ENCODE measurements at regions of chr20 and their contacts with region 1.

Region 1: GRCh38 chr20:23606652-23607049 is 934 bp upstream of the CST9 start:
- DNase-seq: peak; percentile 86
- CTCF ChIP-seq: peak; percentile 95

Region 2: DNA sequence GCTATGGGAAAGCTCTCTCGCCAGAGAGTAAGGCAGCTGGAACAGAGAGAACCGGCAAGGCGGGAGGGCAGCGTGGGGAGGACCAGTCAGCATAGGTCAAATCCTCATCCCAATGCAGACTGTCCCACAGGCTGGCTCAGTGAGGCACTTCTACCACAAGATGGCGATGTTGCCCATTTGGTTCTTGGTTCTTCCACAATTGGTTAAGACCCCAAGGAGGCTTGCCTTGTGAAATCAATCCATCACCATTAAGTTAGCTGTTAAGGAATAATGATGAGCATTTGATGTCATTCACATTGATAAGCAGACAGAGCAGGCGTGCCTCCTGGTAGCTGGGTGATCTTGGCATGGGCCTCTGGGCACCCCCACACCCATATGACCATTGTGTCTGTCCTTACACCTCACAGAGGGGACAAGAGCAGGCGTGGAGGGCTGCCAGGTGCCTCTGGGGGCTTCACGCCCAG is 164.8 kb before region 1 on chr20:
- in situ Hi-C with region 1: loop called (anchors 10 kb)
- DNase-seq: peak; percentile 80
- CTCF ChIP-seq: peak; percentile 87

Measured in GM13977 (cell line).